Vagina (tissue), 2 donors: ENCODE measurements at regions of chr17 and their contacts with region 1.

Region 1: DNA sequence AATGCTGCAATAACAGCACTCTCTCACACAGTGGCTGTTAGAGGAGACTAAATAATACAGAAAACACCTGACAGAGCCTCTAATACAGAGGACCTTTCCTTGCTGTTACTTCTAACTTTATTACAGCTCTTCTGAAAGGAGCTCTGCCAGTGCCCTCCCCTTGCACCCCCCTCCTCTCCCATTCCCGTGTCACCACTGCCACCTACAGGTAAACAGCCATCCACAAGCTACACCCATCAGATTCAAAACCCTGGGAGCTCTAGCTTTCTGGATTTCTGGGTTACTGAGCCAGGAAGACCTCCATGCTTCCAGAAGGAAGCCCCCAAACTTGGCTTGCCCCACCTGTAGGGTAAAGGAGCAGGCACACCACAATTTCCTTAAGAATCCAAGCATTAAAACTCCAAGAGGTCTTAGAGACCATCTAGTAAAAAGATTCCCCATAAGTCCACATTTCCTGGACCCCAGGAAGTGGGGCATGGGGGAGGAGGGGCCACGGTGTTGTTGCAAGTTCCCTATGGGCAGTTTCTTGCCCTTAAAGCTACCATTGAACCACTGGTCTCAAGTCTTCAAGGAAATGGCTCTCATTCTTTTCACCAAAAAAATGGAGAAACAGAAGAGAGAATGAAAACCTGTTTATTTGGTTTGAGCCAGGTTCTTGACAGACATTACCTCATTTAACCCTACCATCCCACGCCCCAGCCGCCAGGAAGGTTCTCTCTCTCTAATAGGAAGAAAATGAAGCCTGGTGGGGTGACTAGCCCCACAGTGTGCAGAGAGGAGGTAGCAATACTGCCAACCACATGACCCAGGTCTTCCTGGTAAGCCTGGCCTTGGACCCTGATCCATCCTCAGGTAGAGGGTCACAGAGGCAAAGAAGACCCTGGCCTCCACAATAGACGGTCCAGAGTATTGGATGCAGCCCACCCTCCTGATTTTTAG is 52.8 kb downstream of the TOM1L2 start:
- DNase-seq: no peak
- H3K4me3 ChIP-seq: no peak overlapping the region
- H3K27ac ChIP-seq: peak overlapping the region; percentile 51
- H3K4me1 ChIP-seq: peaks cover 60% of the 10 kb centered on the region
- H3K27me3 ChIP-seq: no peaks in the 10 kb centered on the region
- CTCF ChIP-seq: peak in 2 of 3 experiments; percentile 65 to 83
- POLR2A ChIP-seq: no peak

Region 2: GRCh38 chr17:17681187-17681848 is 238.1 kb before region 1 on chr17 and contains the start of gene RAI1:
- intact Hi-C with region 1: loop called (anchors 5 kb)
- DNase-seq: no peak
- H3K4me3 ChIP-seq: peak within 1 kb of the TSS; percentile 72 to 99
- H3K27ac ChIP-seq: peak within 1 kb of the TSS; percentile 95
- H3K4me1 ChIP-seq: peaks cover 38% of the 10 kb centered on the region
- H3K27me3 ChIP-seq: no peaks in the 10 kb centered on the region
- CTCF ChIP-seq: peak in 2 of 3 experiments; percentile 44 to 74
- POLR2A ChIP-seq: peak in 1 of 2 donors; percentile 48
- total RNA-seq, gene RAI1: 29.2 TPM

Region 3: GRCh38 chr17:17812211-17813057 is 107.0 kb before region 1 on chr17:
- intact Hi-C with region 1: loop called (anchors 10 kb)
- DNase-seq: no peak
- H3K4me3 ChIP-seq: no peak overlapping the region
- H3K27ac ChIP-seq: peak overlapping the region; percentile 78
- H3K4me1 ChIP-seq: peaks cover 68% of the 10 kb centered on the region
- H3K27me3 ChIP-seq: no peaks in the 10 kb centered on the region
- CTCF ChIP-seq: peak; percentile 99
- POLR2A ChIP-seq: no peak